Sigmoid colon (tissue), 7 donors: ENCODE measurements at regions of chr17 and their contacts with region 1.

Region 1: GRCh38 chr17:601244-601925 is 113.3 kb downstream of the VPS53 start:
- DNase-seq: peak; percentile 73
- H3K4me3 ChIP-seq: no peak overlapping the region
- H3K27ac ChIP-seq: peak overlapping the region; percentile 50 to 79 (median 64)
- H3K4me1 ChIP-seq: peaks cover 0 to 24% (median 23%) of the 10 kb centered on the region in 4 donors
- H3K27me3 ChIP-seq: no peaks in the 10 kb centered on the region
- CTCF ChIP-seq: no peak
- EP300 ChIP-seq: no peak
- POLR2A ChIP-seq: no peak

Region 2: GRCh38 chr17:518047-518735 is 83.2 kb before region 1 on chr17:
- intact Hi-C with region 1: loop called (anchors 5 kb)
- DNase-seq: no peak
- H3K4me3 ChIP-seq: no peak overlapping the region
- H3K27ac ChIP-seq: peak overlapping the region in 1 of 4 donors; percentile 8
- H3K4me1 ChIP-seq: peaks cover 0 to 38% (median 18%) of the 10 kb centered on the region in 4 donors
- H3K27me3 ChIP-seq: no peaks in the 10 kb centered on the region
- CTCF ChIP-seq: no peak
- EP300 ChIP-seq: no peak
- POLR2A ChIP-seq: no peak

Region 3: DNA sequence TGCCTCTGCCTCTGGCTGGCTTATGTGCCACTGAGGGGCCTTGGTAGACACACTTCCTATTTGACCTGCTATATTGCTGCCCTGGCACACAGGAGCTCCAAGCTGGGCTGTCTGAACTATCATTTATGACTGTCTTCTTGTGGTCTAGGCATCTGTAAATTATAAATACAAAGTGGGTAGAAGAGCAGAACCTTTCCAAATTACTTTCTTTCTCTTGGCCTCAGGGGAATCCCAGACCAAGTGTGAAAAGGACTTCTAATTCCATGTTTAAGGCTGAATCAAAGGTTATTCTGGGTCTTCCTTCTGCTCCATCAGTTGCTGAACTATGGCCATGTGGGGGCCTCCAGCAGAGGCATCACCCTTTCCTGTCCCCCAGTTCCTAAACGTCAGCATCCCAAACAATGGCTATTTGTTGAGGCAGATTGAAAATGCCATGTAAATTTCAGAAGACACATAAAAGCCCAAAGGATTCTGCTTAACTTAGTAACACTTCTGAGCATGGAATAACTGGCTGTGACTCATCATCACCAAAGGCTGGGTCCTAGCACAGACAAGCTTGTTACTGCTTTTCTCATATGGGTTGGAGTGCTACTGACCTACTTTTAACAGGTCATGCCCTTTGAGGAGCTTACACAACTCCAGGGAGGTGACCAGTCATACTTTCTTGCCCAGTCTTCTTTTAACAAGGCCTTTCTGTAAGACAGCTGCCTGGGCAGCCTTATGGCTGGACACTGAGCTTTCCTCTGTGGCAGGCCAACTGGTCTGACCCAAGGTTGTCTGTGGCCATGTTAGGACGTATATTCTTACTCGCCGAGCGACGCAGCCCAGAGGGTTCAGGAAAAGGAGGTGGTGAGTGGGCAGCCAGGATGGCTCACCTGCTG is 41.6 kb before region 1 on chr17:
- intact Hi-C with region 1: no loop called
- DNase-seq: peak; percentile 67
- H3K4me3 ChIP-seq: no peak overlapping the region
- H3K27ac ChIP-seq: peak overlapping the region in 3 of 4 donors; percentile 47 to 76 (median 55)
- H3K4me1 ChIP-seq: peaks cover 0 to 16% (median 11%) of the 10 kb centered on the region in 4 donors
- H3K27me3 ChIP-seq: no peaks in the 10 kb centered on the region
- CTCF ChIP-seq: no peak
- EP300 ChIP-seq: no peak
- POLR2A ChIP-seq: no peak

Region 4: DNA sequence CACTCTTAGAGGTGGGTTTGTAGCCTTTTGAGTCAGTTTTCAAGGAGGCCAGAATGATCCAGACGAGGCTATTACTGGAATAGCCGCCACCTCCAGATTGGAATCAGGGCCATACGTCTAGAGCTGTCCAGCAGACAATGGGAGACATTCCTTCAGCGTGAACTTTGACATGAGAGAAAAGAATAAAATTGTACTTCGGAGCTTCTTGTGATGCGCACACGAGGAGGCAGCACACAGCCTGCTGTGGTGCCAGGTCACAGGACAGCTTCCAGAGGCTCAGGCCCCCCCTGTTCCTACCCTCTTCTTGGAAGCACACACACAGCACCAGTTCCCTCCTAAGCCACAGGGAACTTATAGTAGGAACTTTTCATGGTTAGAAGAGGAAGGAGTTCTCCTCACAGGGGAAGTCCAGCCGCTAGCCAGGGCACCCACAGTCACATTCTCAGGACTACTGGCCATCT is 32.3 kb after region 1 on chr17:
- intact Hi-C with region 1: loop called (anchors 1 kb)
- DNase-seq: peak; percentile 80
- H3K4me3 ChIP-seq: no peak overlapping the region
- H3K27ac ChIP-seq: peak overlapping the region; percentile 66 to 82 (median 72)
- H3K4me1 ChIP-seq: peaks cover 0 to 30% (median 27%) of the 10 kb centered on the region in 4 donors
- H3K27me3 ChIP-seq: no peaks in the 10 kb centered on the region
- CTCF ChIP-seq: peak in 1 of 4 experiments; percentile 30
- EP300 ChIP-seq: no peak
- POLR2A ChIP-seq: no peak

Region 5: GRCh38 chr17:794876-795275 is 193.5 kb after region 1 on chr17:
- intact Hi-C with region 1: no loop called
- DNase-seq: peak; percentile 94
- H3K4me3 ChIP-seq: peak overlapping the region in 3 of 4 donors; percentile 18 to 31 (median 19)
- H3K27ac ChIP-seq: peak overlapping the region; percentile 67 to 78 (median 75)
- H3K4me1 ChIP-seq: peaks cover 0 to 32% (median 25%) of the 10 kb centered on the region in 4 donors
- H3K27me3 ChIP-seq: no peaks in the 10 kb centered on the region
- CTCF ChIP-seq: peak; percentile 66 to 82 (median 78)
- EP300 ChIP-seq: no peak
- POLR2A ChIP-seq: no peak